ENCODE measurements at regions of chr2 and their contacts with region 1.

Region 1: GRCh38 chr2:217434181-217434975 is 568.4 kb downstream of the TNS1 start:
- DNase-seq: peak; percentile 88 to 93
- H3K4me3 ChIP-seq: peak overlapping the region; percentile 18 to 20
- H3K27ac ChIP-seq: peak overlapping the region in 1 of 2 donors; percentile 76
- H3K4me1 ChIP-seq: peaks cover 2 to 79% (median 49%) of the 10 kb centered on the region in 4 donors
- H3K27me3 ChIP-seq: no peaks in the 10 kb centered on the region
- CTCF ChIP-seq: no peak

Region 2: DNA sequence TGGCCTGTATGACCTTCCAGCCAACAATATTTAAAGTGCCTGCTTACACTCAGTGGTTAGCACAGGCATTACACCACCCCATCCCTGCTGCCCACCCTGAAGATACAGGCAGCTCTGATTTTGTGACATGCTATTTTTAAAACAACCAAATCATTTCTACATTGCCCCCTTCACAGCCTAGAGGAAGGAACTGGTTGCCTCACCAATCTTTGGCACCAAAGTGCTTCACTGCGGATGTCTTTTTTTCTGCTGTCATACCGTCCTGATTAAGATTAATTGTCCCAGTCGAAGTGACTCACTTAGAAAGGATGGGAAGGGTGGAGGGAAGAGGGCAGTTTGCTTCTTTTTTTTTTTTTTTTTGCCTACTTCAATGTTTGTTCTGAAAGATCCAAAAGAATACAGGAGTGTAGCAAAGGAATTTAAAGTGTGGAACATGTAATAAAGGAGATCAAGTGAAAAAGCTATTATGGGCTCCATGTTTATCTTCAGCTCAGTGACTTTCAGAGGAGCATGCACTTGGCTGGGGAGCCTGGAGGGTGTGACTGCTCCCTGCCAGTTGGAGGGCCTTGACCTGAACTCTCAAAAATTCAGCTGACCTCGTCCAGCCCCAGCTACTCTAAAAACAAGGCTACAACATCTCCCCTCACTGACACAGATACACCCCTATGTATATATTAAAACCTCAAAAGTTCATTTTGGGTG is 73.4 kb before region 1 on chr2:
- intact Hi-C with region 1: loop called (anchors 10 kb)
- DNase-seq: peak; percentile 44 to 81
- H3K4me3 ChIP-seq: no peak overlapping the region
- H3K27ac ChIP-seq: peak overlapping the region; percentile 34 to 78
- H3K4me1 ChIP-seq: peaks cover 0 to 79% (median 63%) of the 10 kb centered on the region in 4 donors
- H3K27me3 ChIP-seq: no peaks in the 10 kb centered on the region
- CTCF ChIP-seq: peak; percentile 20 to 33

Region 3: GRCh38 chr2:217379807-217380206 is 54.6 kb before region 1 on chr2:
- intact Hi-C with region 1: no loop called
- DNase-seq: no peak
- H3K4me3 ChIP-seq: no peak overlapping the region
- H3K27ac ChIP-seq: no peak overlapping the region
- H3K4me1 ChIP-seq: peaks cover 0 to 28% (median 5%) of the 10 kb centered on the region in 4 donors
- H3K27me3 ChIP-seq: no peaks in the 10 kb centered on the region
- CTCF ChIP-seq: no peak